ENCODE measurements at regions of chr7 and their contacts with region 1.

Region 1: GRCh38 chr7:138738551-138739335 is 37.6 kb upstream of the SVOPL start:
- DNase-seq: peak; percentile 84
- ATAC-seq: peak; percentile 98
- H3K4me3 ChIP-seq: no peak overlapping the region
- H3K27ac ChIP-seq: no peak overlapping the region
- H3K4me1 ChIP-seq: no peaks in the 10 kb centered on the region
- H3K27me3 ChIP-seq: no peaks in the 10 kb centered on the region; the same call in 1 of the 2 replicates
- CTCF ChIP-seq: peak; percentile 96
- POLR2A ChIP-seq: no peak
- RAD21 ChIP-seq: peak; percentile 95

Region 2: GRCh38 chr7:137606061-137606674 is 1132.6 kb before region 1 on chr7:
- CTCF ChIA-PET with region 1: no interaction called
- POLR2A ChIA-PET with region 1: no interaction called
- dilution Hi-C with region 1: no loop called
- in situ Hi-C with region 1: loop called (anchors 25 kb)
- intact Hi-C with region 1: loop called (anchors 5 kb)
- DNase-seq: peak; percentile 71
- ATAC-seq: peak; percentile 57; the same call in 1 of the 2 replicates
- H3K4me3 ChIP-seq: no peak overlapping the region
- H3K27ac ChIP-seq: no peak overlapping the region
- H3K4me1 ChIP-seq: no peaks in the 10 kb centered on the region
- H3K27me3 ChIP-seq: no peaks in the 10 kb centered on the region
- CTCF ChIP-seq: peak; percentile 56
- POLR2A ChIP-seq: no peak
- RAD21 ChIP-seq: peak; percentile 55

Region 3: DNA sequence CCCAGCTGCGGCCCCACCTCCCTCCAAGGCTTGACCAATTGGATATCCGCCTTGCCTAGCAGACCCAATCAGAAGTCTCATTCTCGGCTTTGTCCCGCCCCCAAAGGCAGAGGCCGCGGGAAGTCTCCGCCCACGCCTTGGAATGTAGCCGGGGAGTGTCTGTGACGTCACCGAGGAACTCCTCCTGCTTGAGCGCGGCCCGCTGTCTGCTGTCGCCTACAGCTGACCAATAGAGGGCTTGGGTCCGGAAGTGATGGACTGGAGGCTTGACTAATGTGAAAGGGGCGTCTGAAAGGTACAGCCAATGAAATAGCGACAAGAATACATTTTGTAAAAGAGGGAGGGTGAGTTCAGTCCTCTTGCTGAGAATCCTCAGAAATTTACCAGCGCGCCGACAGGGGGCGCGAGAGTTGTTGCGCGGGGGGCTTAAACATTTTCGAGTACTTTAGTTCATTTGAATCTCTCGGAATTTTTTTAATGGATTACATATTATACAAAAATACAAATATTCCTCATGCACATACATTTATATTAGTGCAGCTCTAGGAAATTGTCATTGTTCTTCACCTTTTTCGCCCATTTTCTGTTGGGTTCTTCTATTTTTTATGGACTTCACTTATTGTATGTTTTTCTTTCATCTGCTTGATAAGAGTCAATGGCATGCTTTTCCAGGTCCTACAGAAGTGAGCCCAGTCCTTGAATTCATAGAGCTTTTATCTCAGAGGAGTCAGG is 736.5 kb before region 1 on chr7:
- CTCF ChIA-PET with region 1: no interaction called
- POLR2A ChIA-PET with region 1: no interaction called
- dilution Hi-C with region 1: no loop called
- in situ Hi-C with region 1: no loop called
- intact Hi-C with region 1: loop called (anchors 1 kb)
- DNase-seq: peak; percentile 100
- ATAC-seq: peak; percentile 90
- H3K4me3 ChIP-seq: peak overlapping the region; percentile 85
- H3K27ac ChIP-seq: no peak overlapping the region; the same call in 1 of the 2 replicates
- H3K4me1 ChIP-seq: peaks cover 6% of the 10 kb centered on the region
- H3K27me3 ChIP-seq: no peaks in the 10 kb centered on the region
- CTCF ChIP-seq: peak; percentile 95
- POLR2A ChIP-seq: no peak
- RAD21 ChIP-seq: peak; percentile 53

Region 4: GRCh38 chr7:138023618-138024342 is 715.0 kb before region 1 on chr7:
- CTCF ChIA-PET with region 1: no interaction called
- POLR2A ChIA-PET with region 1: no interaction called
- dilution Hi-C with region 1: no loop called
- in situ Hi-C with region 1: loop called (anchors 10 kb)
- intact Hi-C with region 1: no loop called
- DNase-seq: no peak
- ATAC-seq: no peak
- H3K4me3 ChIP-seq: no peak overlapping the region
- H3K27ac ChIP-seq: no peak overlapping the region
- H3K4me1 ChIP-seq: no peaks in the 10 kb centered on the region
- H3K27me3 ChIP-seq: peaks cover 10% of the 10 kb centered on the region
- CTCF ChIP-seq: no peak
- POLR2A ChIP-seq: no peak
- RAD21 ChIP-seq: no peak

Region 5: DNA sequence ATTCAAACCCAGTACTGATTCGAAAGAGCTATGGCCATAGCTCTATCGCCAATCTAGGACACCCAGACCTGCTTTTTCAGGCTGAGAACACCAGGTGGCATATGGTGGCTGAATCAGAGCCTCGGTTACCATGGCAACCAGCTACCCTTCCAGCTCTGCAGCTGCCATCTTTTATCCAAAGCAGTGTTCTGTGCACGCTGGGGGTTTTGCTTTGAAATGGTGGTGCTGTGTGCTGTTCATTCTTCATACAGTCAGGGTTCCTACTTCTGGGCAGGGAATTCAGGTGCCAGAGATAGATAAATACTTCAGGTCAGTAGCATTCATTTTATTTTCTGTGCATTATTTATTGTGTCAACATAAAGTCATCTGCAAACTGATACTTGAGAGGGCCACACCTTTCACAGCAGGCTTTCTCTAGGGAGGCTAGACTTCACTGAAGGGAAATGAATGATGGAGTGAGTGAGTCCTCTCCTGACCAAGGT is 577.1 kb before region 1 on chr7:
- CTCF ChIA-PET with region 1: interaction called, 28 read pairs
- POLR2A ChIA-PET with region 1: interaction called, 5 read pairs
- dilution Hi-C with region 1: no loop called
- in situ Hi-C with region 1: loop called (anchors 5 kb)
- intact Hi-C with region 1: loop called (anchors 1 kb)
- DNase-seq: peak; percentile 81
- ATAC-seq: peak; percentile 95
- H3K4me3 ChIP-seq: no peak overlapping the region
- H3K27ac ChIP-seq: no peak overlapping the region
- H3K4me1 ChIP-seq: no peaks in the 10 kb centered on the region
- H3K27me3 ChIP-seq: no peaks in the 10 kb centered on the region
- CTCF ChIP-seq: peak; percentile 64
- POLR2A ChIP-seq: no peak
- RAD21 ChIP-seq: peak; percentile 60

Region 6: GRCh38 chr7:138459413-138460175 is 279.1 kb before region 1 on chr7:
- CTCF ChIA-PET with region 1: interaction called, 6 read pairs
- POLR2A ChIA-PET with region 1: no interaction called
- dilution Hi-C with region 1: no loop called
- in situ Hi-C with region 1: no loop called
- intact Hi-C with region 1: loop called (anchors 1 kb)
- DNase-seq: no peak
- ATAC-seq: peak; percentile 95
- H3K4me3 ChIP-seq: peak overlapping the region; percentile 61
- H3K27ac ChIP-seq: no peak overlapping the region
- H3K4me1 ChIP-seq: peaks cover 3% of the 10 kb centered on the region; the same call in 1 of the 2 replicates
- H3K27me3 ChIP-seq: no peaks in the 10 kb centered on the region
- CTCF ChIP-seq: 0 out of 2 replicates have a peak, but pooled peaks have one; percentile 10
- POLR2A ChIP-seq: no peak
- RAD21 ChIP-seq: no peak

Region 7: DNA sequence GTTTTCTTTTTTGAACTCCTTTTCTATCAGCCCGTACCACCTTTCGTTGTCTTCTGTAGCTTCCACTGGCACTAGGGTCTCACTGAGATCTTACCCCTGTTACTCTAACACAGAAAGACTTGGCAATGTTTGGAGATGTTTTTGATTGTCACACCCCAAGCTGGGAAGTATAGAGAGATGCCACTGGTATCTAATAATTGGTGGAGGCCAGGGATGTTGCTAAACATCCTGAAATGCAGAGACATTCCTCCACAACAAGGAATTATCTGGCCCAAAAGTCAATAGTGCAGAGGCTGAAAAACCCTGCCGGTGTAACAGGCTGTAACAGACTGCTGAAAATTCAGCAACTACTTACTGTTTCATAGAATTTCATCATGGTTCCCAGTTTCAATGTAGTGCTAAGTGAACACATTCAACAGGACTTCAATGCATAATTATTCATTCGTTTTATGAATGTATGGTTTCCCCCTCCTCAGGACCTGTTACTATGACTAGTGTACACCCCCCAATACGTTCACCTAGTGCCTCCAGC is 162.8 kb before region 1 on chr7:
- CTCF ChIA-PET with region 1: no interaction called
- POLR2A ChIA-PET with region 1: no interaction called
- dilution Hi-C with region 1: no loop called
- in situ Hi-C with region 1: no loop called
- intact Hi-C with region 1: no loop called
- DNase-seq: no peak
- ATAC-seq: no peak
- H3K4me3 ChIP-seq: no peak overlapping the region
- H3K27ac ChIP-seq: no peak overlapping the region
- H3K4me1 ChIP-seq: no peaks in the 10 kb centered on the region
- H3K27me3 ChIP-seq: no peaks in the 10 kb centered on the region
- CTCF ChIP-seq: no peak
- POLR2A ChIP-seq: no peak
- RAD21 ChIP-seq: no peak

Region 8: GRCh38 chr7:139075031-139075652 is 336.4 kb after region 1 on chr7:
- CTCF ChIA-PET with region 1: no interaction called
- POLR2A ChIA-PET with region 1: no interaction called
- dilution Hi-C with region 1: no loop called
- in situ Hi-C with region 1: no loop called
- intact Hi-C with region 1: loop called (anchors 1 kb)
- DNase-seq: peak; percentile 77
- ATAC-seq: peak; percentile 96
- H3K4me3 ChIP-seq: no peak overlapping the region
- H3K27ac ChIP-seq: no peak overlapping the region
- H3K4me1 ChIP-seq: no peaks in the 10 kb centered on the region
- H3K27me3 ChIP-seq: no peaks in the 10 kb centered on the region
- CTCF ChIP-seq: peak; percentile 88
- POLR2A ChIP-seq: no peak
- RAD21 ChIP-seq: peak; percentile 78

Measured in IMR-90 (cell line).